ENCODE measurements at regions of chr20 and their contacts with region 1.

Region 1: DNA sequence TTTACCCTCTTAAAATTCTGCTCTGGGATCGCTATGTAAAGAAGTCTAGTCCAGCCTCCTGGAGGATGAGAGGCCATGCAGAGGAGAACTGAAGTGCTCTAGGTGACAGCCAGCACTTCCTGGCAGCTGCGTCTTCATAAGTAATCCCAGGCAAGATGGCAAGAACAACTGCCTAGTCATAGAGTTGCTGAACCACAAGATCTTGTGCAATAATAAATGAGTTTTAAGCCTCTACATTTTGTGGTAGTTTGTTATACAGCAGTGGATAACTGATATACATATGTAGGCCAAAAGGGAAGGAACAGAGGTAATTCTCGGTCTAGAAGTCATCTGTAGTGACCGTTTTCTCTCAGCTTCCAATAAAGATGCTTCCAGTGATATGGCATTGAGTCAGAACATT is 103.8 kb upstream of the FLRT3 start:
- DNase-seq: no peak
- H3K4me3 ChIP-seq: no peak overlapping the region
- H3K4me3 Mint-ChIP-seq: no peak overlapping the region
- H3K27ac Mint-ChIP-seq: no peak overlapping the region
- H3K4me1 ChIP-seq: no peaks in the 10 kb centered on the region
- H3K4me1 Mint-ChIP-seq: no peaks in the 10 kb centered on the region
- H3K27me3 ChIP-seq: no peaks in the 10 kb centered on the region
- H3K27me3 Mint-ChIP-seq: no peaks in the 10 kb centered on the region
- CTCF ChIP-seq: no peak

Region 2: DNA sequence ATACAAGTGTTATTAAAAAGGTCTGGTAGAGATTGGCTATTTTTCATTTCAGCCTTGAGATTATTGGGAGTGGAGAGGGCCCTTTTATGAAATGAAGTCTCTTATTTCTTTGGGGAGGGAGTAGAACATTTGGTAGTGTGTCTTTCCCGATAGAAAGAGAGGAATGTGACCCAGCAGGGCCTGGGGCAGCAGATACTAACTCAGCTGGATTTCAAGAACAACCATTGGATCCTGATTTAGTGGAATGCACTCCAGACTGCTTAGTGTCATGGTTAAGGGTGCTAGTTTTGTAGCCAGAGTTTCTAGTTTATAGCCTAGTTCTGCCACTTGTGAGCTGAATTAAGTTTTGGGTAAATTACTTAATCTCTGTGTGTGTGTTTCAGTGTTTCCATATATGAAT is 85.4 kb before region 1 on chr20:
- CTCF ChIA-PET with region 1: interaction called, 11 read pairs
- POLR2A ChIA-PET with region 1: no interaction called
- intact Hi-C with region 1: no loop called
- DNase-seq: no peak
- H3K4me3 ChIP-seq: no peak overlapping the region
- H3K4me3 Mint-ChIP-seq: no peak overlapping the region
- H3K27ac Mint-ChIP-seq: no peak overlapping the region
- H3K4me1 ChIP-seq: peaks cover 6% of the 10 kb centered on the region
- H3K4me1 Mint-ChIP-seq: no peaks in the 10 kb centered on the region
- H3K27me3 ChIP-seq: no peaks in the 10 kb centered on the region
- H3K27me3 Mint-ChIP-seq: no peaks in the 10 kb centered on the region
- CTCF ChIP-seq: no peak